Naive thymus-derived CD4-positive, alpha-beta T cell (primary cell): ENCODE measurements at regions of chr10 and their contacts with region 1.

Region 1: DNA sequence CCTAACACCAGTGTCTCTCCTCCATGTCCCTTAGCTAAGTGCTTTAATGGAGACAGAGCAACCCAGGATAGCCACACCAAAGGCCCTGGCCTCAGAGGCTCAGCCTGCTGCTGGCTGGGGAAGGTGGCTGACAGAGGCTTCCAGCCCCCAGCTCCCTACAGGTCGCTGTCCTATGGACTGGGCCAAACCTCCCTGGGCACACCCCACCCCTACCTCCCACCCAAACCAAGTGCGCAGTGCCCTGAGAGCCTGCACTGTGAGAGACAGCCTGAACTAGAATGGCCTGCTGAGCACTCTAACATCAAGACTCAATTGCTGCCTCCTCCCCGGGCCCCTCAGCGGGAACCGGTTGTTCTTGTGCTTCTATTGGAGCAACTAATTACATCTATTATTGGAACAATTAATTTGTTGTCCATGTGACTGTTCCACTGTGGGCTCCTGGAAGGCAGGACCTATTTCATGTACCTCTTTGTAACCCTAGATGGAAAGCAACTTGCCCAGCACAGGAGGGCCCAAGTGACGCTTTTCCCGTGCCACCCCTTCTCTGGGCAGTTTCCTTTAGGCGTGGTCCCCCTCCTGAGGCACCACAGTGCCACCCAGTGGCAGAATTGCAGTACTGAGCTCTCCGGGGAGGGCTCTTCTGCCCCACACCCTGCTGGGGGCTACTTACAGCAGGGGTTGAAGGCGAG is 63.6 kb upstream of the WAPL start:
- DNase-seq: peak; percentile 57 to 81 (median 67)
- ATAC-seq: peak; percentile 95
- H3K4me3 ChIP-seq: no peak overlapping the region
- H3K4me3 Mint-ChIP-seq: no peak overlapping the region
- H3K27ac ChIP-seq: no peak overlapping the region
- H3K27ac Mint-ChIP-seq: no peak overlapping the region
- H3K4me1 ChIP-seq: no peaks in the 10 kb centered on the region
- H3K4me1 Mint-ChIP-seq: peaks cover 0 to 4% (median 0%) of the 10 kb centered on the region in 7 donors
- H3K27me3 ChIP-seq: no peaks in the 10 kb centered on the region
- H3K27me3 Mint-ChIP-seq: peaks cover 0 to 2% (median 0%) of the 10 kb centered on the region in 5 donors

Region 2: GRCh38 chr10:85557077-85557476 is 1028.1 kb before region 1 on chr10:
- CTCF ChIA-PET with region 1: no interaction called
- POLR2A ChIA-PET with region 1: no interaction called
- intact Hi-C with region 1: loop called in 1 of 2 experiments (anchors 10 kb)
- DNase-seq: no peak
- ATAC-seq: no peak
- H3K4me3 ChIP-seq: no peak overlapping the region
- H3K4me3 Mint-ChIP-seq: no peak overlapping the region
- H3K27ac ChIP-seq: no peak overlapping the region
- H3K27ac Mint-ChIP-seq: no peak overlapping the region
- H3K4me1 ChIP-seq: no peaks in the 10 kb centered on the region
- H3K4me1 Mint-ChIP-seq: peaks cover 0 to 2% (median 0%) of the 10 kb centered on the region in 7 donors
- H3K27me3 ChIP-seq: no peaks in the 10 kb centered on the region
- H3K27me3 Mint-ChIP-seq: peaks cover 0 to 12% (median 5%) of the 10 kb centered on the region in 5 donors

Region 3: GRCh38 chr10:86007171-86007570 is 578.0 kb before region 1 on chr10:
- CTCF ChIA-PET with region 1: no interaction called
- POLR2A ChIA-PET with region 1: no interaction called
- intact Hi-C with region 1: no loop called
- DNase-seq: no peak
- ATAC-seq: no peak
- H3K4me3 ChIP-seq: no peak overlapping the region
- H3K4me3 Mint-ChIP-seq: no peak overlapping the region
- H3K27ac ChIP-seq: no peak overlapping the region
- H3K27ac Mint-ChIP-seq: no peak overlapping the region
- H3K4me1 ChIP-seq: no peaks in the 10 kb centered on the region
- H3K4me1 Mint-ChIP-seq: no peaks in the 10 kb centered on the region
- H3K27me3 ChIP-seq: no peaks in the 10 kb centered on the region
- H3K27me3 Mint-ChIP-seq: peaks cover 5 to 34% (median 9%) of the 10 kb centered on the region in 5 donors

Region 4: GRCh38 chr10:86261941-86262687 is 323.1 kb before region 1 on chr10:
- CTCF ChIA-PET with region 1: no interaction called
- POLR2A ChIA-PET with region 1: no interaction called
- intact Hi-C with region 1: loop called in 1 of 2 experiments (anchors 5 kb)
- DNase-seq: peak in 2 of 9 donors; percentile 14 to 16
- ATAC-seq: no peak
- H3K4me3 ChIP-seq: no peak overlapping the region
- H3K4me3 Mint-ChIP-seq: peak overlapping the region in 3 of 10 donors; percentile 19 to 26 (median 25)
- H3K27ac ChIP-seq: no peak overlapping the region
- H3K27ac Mint-ChIP-seq: no peak overlapping the region
- H3K4me1 ChIP-seq: no peaks in the 10 kb centered on the region
- H3K4me1 Mint-ChIP-seq: peaks cover 0 to 11% (median 5%) of the 10 kb centered on the region in 7 donors
- H3K27me3 ChIP-seq: peaks cover 0 to 3% of the 10 kb centered on the region in 2 donors
- H3K27me3 Mint-ChIP-seq: peaks cover 21 to 55% (median 33%) of the 10 kb centered on the region in 5 donors

Region 5: GRCh38 chr10:86411281-86411841 is 173.8 kb before region 1 on chr10:
- CTCF ChIA-PET with region 1: interaction called, 12 read pairs
- POLR2A ChIA-PET with region 1: interaction called, 5 read pairs
- intact Hi-C with region 1: no loop called
- DNase-seq: peak in 7 of 9 donors; percentile 22 to 38 (median 36)
- ATAC-seq: peak; percentile 70
- H3K4me3 ChIP-seq: peak overlapping the region; percentile 8
- H3K4me3 Mint-ChIP-seq: peak overlapping the region; percentile 62 to 83 (median 77)
- H3K27ac ChIP-seq: peak overlapping the region; percentile 42
- H3K27ac Mint-ChIP-seq: peak overlapping the region; percentile 84 to 94 (median 88)
- H3K4me1 ChIP-seq: peaks cover 20 to 48% of the 10 kb centered on the region in 2 donors
- H3K4me1 Mint-ChIP-seq: peaks cover 24 to 72% (median 57%) of the 10 kb centered on the region in 7 donors
- H3K27me3 ChIP-seq: no peaks in the 10 kb centered on the region
- H3K27me3 Mint-ChIP-seq: peaks cover 0 to 3% (median 0%) of the 10 kb centered on the region in 5 donors

Region 6: GRCh38 chr10:86451604-86451960 is 133.6 kb before region 1 on chr10:
- CTCF ChIA-PET with region 1: no interaction called
- POLR2A ChIA-PET with region 1: no interaction called
- intact Hi-C with region 1: loop called in 1 of 2 experiments (anchors 5 kb)
- DNase-seq: no peak
- ATAC-seq: no peak
- H3K4me3 ChIP-seq: no peak overlapping the region
- H3K4me3 Mint-ChIP-seq: no peak overlapping the region
- H3K27ac ChIP-seq: no peak overlapping the region
- H3K27ac Mint-ChIP-seq: peak overlapping the region in 6 of 9 donors; percentile 5 to 38 (median 22)
- H3K4me1 ChIP-seq: no peaks in the 10 kb centered on the region
- H3K4me1 Mint-ChIP-seq: peaks cover 15 to 45% (median 34%) of the 10 kb centered on the region in 7 donors
- H3K27me3 ChIP-seq: no peaks in the 10 kb centered on the region
- H3K27me3 Mint-ChIP-seq: no peaks in the 10 kb centered on the region

Region 7: DNA sequence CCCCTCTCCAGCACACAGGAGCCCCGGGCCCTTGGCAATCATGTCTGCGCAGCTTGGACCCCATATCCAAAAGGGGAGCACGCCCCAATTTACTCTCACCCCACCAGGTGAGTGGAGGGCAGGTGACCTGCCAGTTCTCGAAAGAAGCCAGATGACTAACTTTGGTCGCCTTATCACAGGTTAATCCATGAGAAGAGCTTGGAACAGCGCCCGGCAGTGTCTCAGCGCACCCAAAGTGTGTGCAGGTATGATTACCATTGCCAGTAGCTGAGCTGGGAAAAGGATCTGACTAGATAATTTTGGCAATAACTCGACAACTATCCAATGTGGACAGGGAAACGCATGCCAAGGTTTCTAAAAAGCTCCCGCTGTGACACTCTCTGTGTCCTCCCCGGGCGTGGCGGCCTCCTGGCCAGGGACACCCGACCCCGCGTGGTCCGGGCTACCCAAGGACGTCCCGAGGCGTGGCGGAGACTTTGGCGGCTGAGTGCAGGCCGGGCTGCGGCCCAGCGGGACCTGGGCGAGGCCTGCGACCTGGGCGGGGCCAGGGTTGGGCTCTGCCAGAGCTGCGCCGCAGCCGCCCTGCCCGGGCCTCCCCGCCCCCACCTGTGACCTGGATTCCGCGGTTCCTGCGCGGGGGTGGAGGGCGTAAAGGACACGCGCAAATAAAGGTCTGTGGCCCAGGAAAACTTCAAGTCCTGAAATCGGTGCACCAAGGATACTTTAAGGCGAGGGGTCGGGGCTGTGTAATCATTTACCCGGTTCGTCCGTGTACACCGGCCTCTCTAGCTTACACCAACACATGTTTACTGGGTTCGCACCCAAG is 49.9 kb before region 1 on chr10:
- CTCF ChIA-PET with region 1: interaction called, 5 read pairs
- POLR2A ChIA-PET with region 1: no interaction called
- intact Hi-C with region 1: loop called in 1 of 2 experiments (anchors 2 kb)
- DNase-seq: peak in 3 of 9 donors; percentile 10 to 31 (median 14)
- ATAC-seq: peak; percentile 55
- H3K4me3 ChIP-seq: no peak overlapping the region
- H3K4me3 Mint-ChIP-seq: peak overlapping the region; percentile 62 to 88 (median 77)
- H3K27ac ChIP-seq: no peak overlapping the region
- H3K27ac Mint-ChIP-seq: peak overlapping the region in 8 of 9 donors; percentile 36 to 93 (median 75)
- H3K4me1 ChIP-seq: peaks cover 0 to 21% of the 10 kb centered on the region in 2 donors
- H3K4me1 Mint-ChIP-seq: peaks cover 21 to 42% (median 38%) of the 10 kb centered on the region in 7 donors
- H3K27me3 ChIP-seq: no peaks in the 10 kb centered on the region
- H3K27me3 Mint-ChIP-seq: no peaks in the 10 kb centered on the region